Head of caudate nucleus (tissue), 42 donors: ENCODE measurements at regions of chr1 and their contacts with region 1.

Region 1: GRCh38 chr1:160951443-160952128 is 3.0 kb downstream of the ITLN2 start:
- DNase-seq: peak; percentile 28 to 83 (median 68)

Region 2: DNA sequence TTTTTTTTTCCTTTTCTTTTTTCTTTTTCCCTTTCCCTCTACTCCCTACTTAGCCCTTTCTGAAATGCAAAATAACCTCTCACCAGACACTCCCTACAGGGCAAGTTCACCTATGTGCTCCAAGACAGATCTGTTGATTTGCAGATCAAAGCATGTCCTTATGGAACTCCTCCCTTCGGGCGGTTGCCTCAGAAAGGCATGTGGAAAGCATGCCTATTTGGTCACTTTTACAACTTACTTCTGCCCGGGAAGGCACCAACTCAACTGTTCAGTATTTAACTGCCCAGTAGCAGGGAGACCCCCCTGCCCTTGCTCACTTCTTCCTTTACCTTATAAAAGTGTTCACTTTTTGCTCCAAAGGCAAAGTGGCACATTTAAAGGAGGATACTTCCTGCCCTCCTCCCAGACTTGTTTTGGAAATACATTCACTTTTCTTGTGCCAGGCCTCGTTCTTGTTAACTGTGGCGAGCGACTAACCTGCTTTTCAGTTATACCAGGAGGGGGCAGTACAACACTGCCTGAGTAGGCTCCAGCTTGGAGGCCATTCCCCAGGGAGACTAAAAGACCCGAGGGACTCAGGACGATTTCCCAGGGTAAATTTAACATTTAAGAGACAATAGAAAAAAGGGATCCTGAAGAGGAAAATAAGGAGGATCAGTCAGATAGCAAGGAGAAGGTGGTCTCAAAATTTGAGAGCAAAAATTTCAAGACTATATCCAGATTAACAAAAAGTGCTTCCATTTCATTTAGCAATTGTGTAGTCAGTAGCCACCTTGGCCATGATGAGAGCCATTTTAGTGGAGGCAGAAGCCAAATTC is 224.9 kb before region 1 on chr1:
- intact Hi-C with region 1: loop called (anchors 10 kb)
- DNase-seq: peak; percentile 8 to 85 (median 62)

Region 3: DNA sequence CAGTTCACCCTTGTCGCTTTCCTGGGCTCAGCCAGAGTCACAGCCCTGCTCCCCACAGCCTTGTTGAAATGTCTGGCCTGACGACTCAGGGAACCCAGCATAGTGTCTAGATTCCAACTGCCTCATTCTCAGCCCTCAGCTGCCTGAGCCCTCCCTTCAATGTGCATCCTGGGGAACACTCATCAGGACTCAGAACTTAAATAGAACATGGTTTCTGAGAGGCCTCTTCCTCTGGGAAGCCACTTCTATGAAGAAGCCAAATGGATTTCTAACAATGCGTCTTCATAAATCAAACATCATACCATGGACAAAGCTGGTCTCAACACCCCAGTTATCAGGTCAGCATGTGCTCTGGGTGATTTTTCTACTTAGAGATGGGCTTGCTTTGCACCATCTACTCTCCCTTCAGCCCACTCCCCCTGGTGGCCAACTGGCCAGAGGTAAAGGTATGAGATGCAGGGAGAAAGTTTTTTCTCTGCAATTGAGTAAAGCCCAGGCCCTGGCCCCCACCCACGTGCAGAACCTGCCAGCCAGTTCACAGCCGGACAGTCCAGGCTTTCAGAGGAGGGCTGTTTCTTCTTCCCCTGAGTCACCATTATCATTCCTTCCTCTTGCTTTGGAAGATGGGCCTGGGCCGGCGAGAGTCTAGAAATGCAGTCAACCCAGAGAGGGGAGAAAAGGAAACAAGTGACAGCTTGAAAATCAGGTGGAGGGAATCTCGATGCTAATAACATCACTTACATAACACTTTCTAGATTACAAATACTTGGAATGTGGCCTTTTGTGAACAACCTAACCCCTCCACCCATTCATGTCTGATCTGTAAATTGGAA is 121.0 kb before region 1 on chr1:
- intact Hi-C with region 1: loop called (anchors 10 kb)
- DNase-seq: peak in 8 of 42 donors; percentile 4 to 54 (median 29)

Region 4: DNA sequence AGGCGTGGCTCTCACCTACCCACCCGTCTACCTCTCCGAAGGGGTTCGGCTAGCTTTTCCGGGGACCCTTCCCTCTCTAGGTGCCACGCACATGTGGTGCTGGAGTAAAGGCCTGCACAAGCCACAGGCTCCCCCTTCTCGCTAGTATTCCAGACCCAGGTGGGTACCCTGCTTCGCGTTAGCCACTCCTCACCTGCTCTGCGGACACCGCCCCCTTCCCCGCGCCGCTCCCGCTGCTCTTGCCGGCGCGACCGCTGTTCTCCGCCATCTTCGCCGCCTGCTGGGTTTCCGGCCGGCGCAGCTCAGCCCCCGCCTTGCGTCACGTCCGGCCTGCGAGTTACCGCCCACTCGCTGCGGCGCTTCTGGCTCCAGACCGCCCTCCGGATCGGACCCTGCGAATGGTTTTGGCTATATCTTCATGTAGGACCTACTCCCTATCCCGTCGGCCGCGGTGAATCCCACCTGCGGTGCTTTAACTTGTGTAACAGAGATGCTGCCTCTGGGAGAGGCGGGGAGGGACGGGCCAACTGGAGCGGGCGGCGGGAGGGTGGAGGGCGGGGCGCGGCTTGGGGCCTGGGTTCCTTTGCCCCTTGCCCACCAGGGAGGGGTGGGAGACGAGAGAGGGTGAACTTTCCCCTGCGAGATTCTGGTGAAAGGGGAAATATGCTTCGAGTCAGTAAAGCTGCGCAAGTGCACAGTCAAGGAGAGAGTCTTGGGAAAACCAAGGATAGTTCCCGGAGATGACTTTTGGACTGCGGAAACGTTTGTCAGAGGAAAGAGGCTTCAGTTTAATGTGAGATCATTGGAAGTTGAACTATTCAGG is 166.4 kb after region 1 on chr1 and contains the starts of genes NIT1 and PFDN2:
- intact Hi-C with region 1: no loop called
- DNase-seq: peak; percentile 69 to 94 (median 90)